HEK293 (cell line): ENCODE measurements at regions of chr6 and their contacts with region 1.

Region 1: GRCh38 chr6:14129575-14129974 is 12.0 kb downstream of the CD83 start:
- H3K4me3 ChIP-seq: no peak overlapping the region
- H3K27ac ChIP-seq: no peak overlapping the region
- H3K4me1 ChIP-seq: peaks cover 4% of the 10 kb centered on the region; the same call in 1 of the 2 replicates
- CTCF ChIP-seq: peak; percentile 79; the same call in 1 of the 2 replicates

Region 2: DNA sequence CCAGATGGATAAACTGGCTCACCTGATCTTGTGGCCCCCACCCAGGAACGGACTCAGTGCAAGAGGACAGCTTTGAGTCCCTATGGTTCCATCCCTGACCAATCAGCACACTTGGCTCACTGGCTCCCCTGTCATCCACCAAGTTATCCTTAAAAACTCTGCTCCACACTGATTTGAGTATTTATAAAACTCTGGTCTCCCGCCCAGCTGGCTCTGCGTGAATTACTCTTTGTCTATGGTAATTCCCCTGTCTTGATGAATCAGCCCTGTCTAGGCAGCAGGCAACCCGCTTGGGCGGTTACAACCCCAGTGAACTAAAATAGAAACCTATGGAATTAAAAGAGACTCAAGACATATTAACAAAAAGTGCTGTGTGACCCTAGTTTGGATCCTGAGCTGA is 50.1 kb before region 1 on chr6:
- CTCF ChIA-PET with region 1: no interaction called
- POLR2A ChIA-PET with region 1: no interaction called
- H3K4me3 ChIP-seq: no peak overlapping the region
- H3K27ac ChIP-seq: no peak overlapping the region
- H3K4me1 ChIP-seq: no peaks in the 10 kb centered on the region
- CTCF ChIP-seq: no peak

Region 3: GRCh38 chr6:14117158-14118090 is 12.2 kb before region 1 on chr6 and contains the start of gene CD83:
- CTCF ChIA-PET with region 1: interaction called, 22 read pairs
- POLR2A ChIA-PET with region 1: no interaction called
- H3K4me3 ChIP-seq: peak within 1 kb of the TSS; percentile 83
- H3K27ac ChIP-seq: peak within 1 kb of the TSS; percentile 48; the same call in 1 of the 2 replicates
- H3K4me1 ChIP-seq: peaks cover 5% of the 10 kb centered on the region
- CTCF ChIP-seq: peak; percentile 92

Region 4: GRCh38 chr6:14144678-14145113 is 15.1 kb after region 1 on chr6:
- CTCF ChIA-PET with region 1: interaction called, 85 read pairs
- POLR2A ChIA-PET with region 1: no interaction called
- H3K4me3 ChIP-seq: no peak overlapping the region
- H3K27ac ChIP-seq: no peak overlapping the region
- H3K4me1 ChIP-seq: peaks cover 3% of the 10 kb centered on the region
- CTCF ChIP-seq: peak; percentile 87; the same call in 1 of the 2 replicates

Region 5: DNA sequence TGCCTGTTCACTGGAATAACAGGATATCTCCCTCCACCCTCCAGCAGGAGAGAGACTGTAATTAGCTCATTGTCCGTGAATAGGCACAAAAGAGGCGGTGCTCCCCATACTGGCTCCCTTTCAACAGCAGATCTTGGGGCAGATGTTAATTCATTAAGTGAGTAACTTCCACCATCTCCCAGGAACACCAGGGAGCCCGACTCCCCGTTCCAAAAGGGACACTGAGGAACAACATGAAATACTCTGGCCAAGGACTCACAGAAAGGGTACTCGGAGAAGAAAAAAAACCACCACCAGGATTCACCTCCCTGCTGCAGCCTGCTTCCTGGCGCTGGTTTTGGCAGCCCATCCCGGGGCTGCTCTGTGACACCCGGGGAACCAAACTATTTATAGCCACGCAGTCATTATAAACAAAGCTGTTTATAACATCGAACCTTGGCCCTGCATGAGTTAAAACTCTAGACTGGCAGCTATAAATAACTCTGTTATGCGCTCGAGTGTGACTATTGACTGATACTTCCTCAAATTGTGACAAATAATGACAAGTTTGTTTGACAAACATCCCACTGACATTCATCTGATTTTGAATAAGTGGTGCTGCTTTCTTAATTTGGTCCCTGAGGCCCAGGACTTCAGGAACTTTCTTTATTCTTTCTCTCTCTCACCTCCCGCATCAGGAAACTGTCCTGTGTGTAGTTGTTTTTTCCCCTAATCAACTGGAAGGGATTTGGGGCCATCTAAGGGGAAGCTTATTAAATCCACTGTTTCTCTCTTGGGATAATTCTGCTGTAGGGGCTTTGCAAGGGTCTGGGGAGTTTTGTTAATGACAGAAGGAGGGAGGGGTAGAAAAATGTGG is 509.6 kb after region 1 on chr6:
- CTCF ChIA-PET with region 1: no interaction called
- POLR2A ChIA-PET with region 1: no interaction called
- H3K4me3 ChIP-seq: no peak overlapping the region
- H3K27ac ChIP-seq: no peak overlapping the region
- H3K4me1 ChIP-seq: peaks cover 16% of the 10 kb centered on the region
- CTCF ChIP-seq: no peak

Region 6: DNA sequence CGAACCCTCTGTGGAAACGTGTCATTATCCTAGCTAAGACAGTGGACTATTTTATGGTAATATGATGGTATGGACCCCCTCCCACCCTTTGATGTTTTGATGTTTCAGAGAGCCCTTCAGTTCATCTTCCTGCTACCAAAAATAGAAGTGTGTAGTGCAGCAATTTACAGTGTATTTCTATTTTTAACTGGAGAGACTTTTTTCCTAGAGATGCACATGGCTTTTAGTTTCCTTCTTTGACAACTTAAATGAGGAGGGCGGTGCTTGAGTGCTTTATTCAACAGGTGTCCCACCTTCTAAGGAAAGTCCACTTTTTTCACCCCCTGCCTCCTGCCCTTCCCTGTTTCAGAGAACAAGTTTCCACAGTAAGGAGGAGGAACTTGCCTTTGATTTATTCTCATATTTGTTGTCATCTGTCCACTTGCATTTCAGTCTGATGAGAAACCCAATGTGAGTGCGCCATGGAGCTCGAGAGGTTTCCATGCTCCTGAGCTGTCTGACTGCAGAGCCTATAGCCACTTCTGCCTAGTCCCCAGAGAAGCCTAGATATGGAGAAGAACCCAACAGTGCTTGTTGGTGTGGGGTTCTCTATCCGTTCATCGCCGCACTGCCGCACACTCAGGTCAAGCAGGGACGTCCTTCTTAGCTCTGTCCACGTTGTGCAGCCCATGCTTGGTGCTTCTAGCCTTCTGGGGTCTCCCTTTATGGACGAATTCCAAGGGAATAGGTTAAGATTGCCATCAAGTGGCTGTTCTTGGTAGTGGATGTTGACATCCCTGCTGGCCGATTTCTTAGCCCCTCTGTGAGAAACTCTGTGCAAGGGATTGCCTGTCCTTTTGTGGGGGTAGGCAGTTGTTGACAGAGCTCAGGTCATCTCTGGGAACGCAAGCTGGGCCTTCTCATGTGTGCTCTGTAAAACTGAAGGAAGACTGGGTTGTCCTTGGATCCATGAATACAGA is 1260.5 kb after region 1 on chr6:
- CTCF ChIA-PET with region 1: interaction called, 10 read pairs
- POLR2A ChIA-PET with region 1: no interaction called
- H3K4me3 ChIP-seq: no peak overlapping the region
- H3K27ac ChIP-seq: no peak overlapping the region; the same call in 1 of the 2 replicates
- H3K4me1 ChIP-seq: peaks cover 28% of the 10 kb centered on the region
- CTCF ChIP-seq: peak; percentile 81

Region 7: DNA sequence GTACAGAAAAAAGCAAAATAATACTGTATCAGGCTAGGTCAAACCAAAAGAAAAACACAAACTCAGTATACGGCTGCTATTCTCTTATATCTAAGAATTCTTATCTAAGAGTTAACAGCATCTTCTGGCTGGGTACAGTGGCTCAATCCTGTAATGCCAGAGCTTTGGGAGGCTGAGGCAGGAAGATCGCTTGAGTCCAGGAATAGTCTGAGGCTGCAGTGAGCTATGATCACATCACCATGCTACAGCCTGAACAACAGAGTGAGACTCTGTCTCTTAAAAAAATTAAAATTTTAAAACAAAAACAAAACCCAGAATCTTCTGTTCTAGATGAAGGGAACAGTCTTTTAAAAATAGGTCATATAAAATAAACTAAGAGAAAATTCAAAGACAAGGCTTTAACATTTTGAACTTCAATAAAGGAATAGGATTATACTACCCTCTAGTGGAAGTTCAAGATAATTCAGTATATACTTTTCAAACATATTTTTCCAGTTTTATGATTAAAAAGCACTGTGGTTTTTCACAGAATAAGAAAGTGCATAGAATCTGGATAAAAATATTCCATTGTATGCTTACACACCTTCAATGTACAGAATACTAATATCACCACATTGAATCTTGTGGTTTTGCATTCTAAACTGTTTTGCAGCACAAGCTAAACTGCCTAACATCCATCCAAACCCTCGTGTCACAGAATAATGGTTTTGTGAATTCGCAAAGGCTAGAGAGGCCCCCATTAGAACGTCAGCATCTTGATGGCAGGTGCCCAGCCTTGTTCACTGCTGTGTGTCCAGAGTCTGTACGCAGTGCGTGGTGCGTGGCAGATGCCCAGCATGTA is 1493.9 kb after region 1 on chr6:
- CTCF ChIA-PET with region 1: interaction called, 17 read pairs
- POLR2A ChIA-PET with region 1: no interaction called
- H3K4me3 ChIP-seq: no peak overlapping the region
- H3K27ac ChIP-seq: no peak overlapping the region
- H3K4me1 ChIP-seq: peaks cover 23% of the 10 kb centered on the region
- CTCF ChIP-seq: no peak